Activated CD4-positive, alpha-beta T cell treated with anti-CD3 and anti-CD28 coated beads for 36 hours (primary cell): ENCODE measurements at regions of chr1 and their contacts with region 1.

Region 1: DNA sequence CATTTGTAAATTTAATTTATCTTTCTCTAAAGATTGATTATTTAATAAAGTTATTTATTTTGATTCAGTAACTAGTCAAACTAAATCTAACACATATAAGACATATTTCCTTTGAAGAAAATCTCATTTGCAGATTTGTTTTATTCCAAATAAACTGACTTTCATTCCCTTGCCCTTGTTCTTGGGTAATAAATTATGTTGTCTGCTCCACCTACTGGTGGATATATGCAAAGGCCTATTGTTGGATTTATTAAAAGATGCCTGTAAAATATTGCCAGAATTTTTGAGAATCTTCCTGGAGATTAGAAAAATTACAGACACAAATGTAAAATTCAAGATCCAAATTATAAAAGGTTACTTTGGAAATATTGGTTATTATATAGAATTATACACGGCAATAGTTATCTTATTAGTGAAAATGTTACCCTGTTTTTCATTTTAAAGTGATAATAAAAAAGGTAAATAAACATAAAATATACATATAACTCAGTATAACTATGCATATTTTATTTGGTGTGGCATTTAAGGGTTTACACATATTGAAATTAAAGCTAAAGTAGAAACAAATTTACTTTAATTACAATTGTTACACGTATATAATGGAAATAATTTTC is 116.1 kb downstream of the SPATA17 start:
- DNase-seq: no peak
- ATAC-seq: no peak
- H3K4me3 Mint-ChIP-seq: no peak overlapping the region
- H3K27ac Mint-ChIP-seq: no peak overlapping the region
- H3K4me1 Mint-ChIP-seq: no peaks in the 10 kb centered on the region
- H3K27me3 Mint-ChIP-seq: no peaks in the 10 kb centered on the region

Region 2: GRCh38 chr1:216750012-216750627 is 997.1 kb before region 1 on chr1:
- CTCF ChIA-PET with region 1: no interaction called
- POLR2A ChIA-PET with region 1: no interaction called
- intact Hi-C with region 1: loop called in 1 of 2 experiments (anchors 5 kb)
- DNase-seq: no peak
- ATAC-seq: no peak
- H3K4me3 Mint-ChIP-seq: no peak overlapping the region
- H3K27ac Mint-ChIP-seq: no peak overlapping the region
- H3K4me1 Mint-ChIP-seq: no peaks in the 10 kb centered on the region
- H3K27me3 Mint-ChIP-seq: no peaks in the 10 kb centered on the region

Region 3: DNA sequence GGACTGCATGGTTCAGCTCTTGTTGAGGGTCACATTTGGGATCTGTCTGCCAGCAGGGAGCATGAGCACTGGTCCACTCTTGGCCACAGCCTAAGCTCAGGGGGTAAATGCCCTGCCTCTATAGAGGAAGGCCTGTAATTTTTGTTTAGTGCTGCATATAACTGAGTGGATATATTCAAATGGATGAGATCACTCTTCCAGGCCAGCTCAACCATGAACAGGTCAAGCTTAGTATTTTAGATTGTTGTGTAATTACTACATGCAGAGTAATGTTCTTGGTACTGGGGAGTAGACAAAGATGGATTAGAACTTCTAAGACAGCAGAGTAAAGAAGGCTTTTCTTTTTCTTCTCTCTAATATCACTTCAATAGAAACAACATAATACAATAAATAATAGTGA is 493.3 kb before region 1 on chr1:
- CTCF ChIA-PET with region 1: no interaction called
- POLR2A ChIA-PET with region 1: no interaction called
- intact Hi-C with region 1: loop called in 1 of 2 experiments (anchors 10 kb)
- DNase-seq: no peak
- ATAC-seq: no peak
- H3K4me3 Mint-ChIP-seq: no peak overlapping the region
- H3K27ac Mint-ChIP-seq: no peak overlapping the region
- H3K4me1 Mint-ChIP-seq: no peaks in the 10 kb centered on the region
- H3K27me3 Mint-ChIP-seq: no peaks in the 10 kb centered on the region

Region 4: GRCh38 chr1:217425422-217425821 is 321.8 kb before region 1 on chr1:
- CTCF ChIA-PET with region 1: no interaction called
- POLR2A ChIA-PET with region 1: no interaction called
- intact Hi-C with region 1: loop called in 1 of 2 experiments (anchors 10 kb)
- DNase-seq: no peak
- ATAC-seq: no peak
- H3K4me3 Mint-ChIP-seq: no peak overlapping the region
- H3K27ac Mint-ChIP-seq: no peak overlapping the region
- H3K4me1 Mint-ChIP-seq: no peaks in the 10 kb centered on the region
- H3K27me3 Mint-ChIP-seq: no peaks in the 10 kb centered on the region

Region 5: GRCh38 chr1:218171285-218171893 is 424.1 kb after region 1 on chr1:
- CTCF ChIA-PET with region 1: no interaction called
- POLR2A ChIA-PET with region 1: no interaction called
- intact Hi-C with region 1: loop called in 1 of 2 experiments (anchors 2 kb)
- DNase-seq: no peak
- ATAC-seq: no peak
- H3K4me3 Mint-ChIP-seq: no peak overlapping the region
- H3K27ac Mint-ChIP-seq: no peak overlapping the region
- H3K4me1 Mint-ChIP-seq: no peaks in the 10 kb centered on the region
- H3K27me3 Mint-ChIP-seq: peaks cover 25% of the 10 kb centered on the region